Heart right ventricle (tissue), 16 donors: ENCODE measurements at regions of chr21 and their contacts with region 1.

Region 1: DNA sequence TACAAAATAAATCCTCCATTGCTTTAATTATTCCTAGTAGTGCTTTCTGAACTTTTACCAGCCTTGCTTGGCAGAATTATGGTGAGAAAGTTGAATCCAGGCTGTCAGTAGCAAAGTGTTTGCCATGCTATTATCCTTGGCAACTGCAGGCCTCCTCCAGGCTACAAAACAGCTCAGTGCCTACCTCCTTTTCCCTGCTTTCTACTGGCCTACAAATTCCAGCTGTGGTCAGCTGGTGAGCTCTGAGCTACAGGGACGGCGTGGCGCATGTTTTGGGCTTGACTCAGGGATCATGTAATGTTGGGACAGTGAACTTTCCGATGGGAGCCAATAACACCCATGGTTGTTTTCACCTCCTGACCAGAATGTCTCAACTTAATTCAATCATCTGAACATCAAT is 456.1 kb upstream of the ADAMTS5 start:
- DNase-seq: peak; percentile 51 to 59
- ATAC-seq: peak; percentile 65 to 93 (median 84)
- H3K4me3 ChIP-seq: no peak overlapping the region
- H3K27ac ChIP-seq: peak overlapping the region in 6 of 10 donors; percentile 3 to 53 (median 24)
- H3K4me1 ChIP-seq: peaks cover 0 to 53% (median 18%) of the 10 kb centered on the region in 9 donors
- H3K27me3 ChIP-seq: no peaks in the 10 kb centered on the region
- CTCF ChIP-seq: no peak

Region 2: GRCh38 chr21:26967062-26967913 is 455.8 kb before region 1 on chr21 and contains the start of gene ADAMTS5:
- intact Hi-C with region 1: loop called in 1 of 10 experiments (anchors 10 kb)
- DNase-seq: peak; percentile 35 to 55
- ATAC-seq: peak; percentile 19 to 70 (median 61)
- H3K4me3 ChIP-seq: peak within 1 kb of the TSS; percentile 53 to 76 (median 64)
- H3K27ac ChIP-seq: peak within 1 kb of the TSS; percentile 58 to 82 (median 74)
- H3K4me1 ChIP-seq: peaks cover 0 to 33% (median 15%) of the 10 kb centered on the region in 9 donors
- H3K27me3 ChIP-seq: peaks cover 0 to 62% (median 31%) of the 10 kb centered on the region in 7 donors
- CTCF ChIP-seq: no peak
- total RNA-seq, gene ADAMTS5: 1.6 to 7.1 (median 3.0) TPM

Region 3: DNA sequence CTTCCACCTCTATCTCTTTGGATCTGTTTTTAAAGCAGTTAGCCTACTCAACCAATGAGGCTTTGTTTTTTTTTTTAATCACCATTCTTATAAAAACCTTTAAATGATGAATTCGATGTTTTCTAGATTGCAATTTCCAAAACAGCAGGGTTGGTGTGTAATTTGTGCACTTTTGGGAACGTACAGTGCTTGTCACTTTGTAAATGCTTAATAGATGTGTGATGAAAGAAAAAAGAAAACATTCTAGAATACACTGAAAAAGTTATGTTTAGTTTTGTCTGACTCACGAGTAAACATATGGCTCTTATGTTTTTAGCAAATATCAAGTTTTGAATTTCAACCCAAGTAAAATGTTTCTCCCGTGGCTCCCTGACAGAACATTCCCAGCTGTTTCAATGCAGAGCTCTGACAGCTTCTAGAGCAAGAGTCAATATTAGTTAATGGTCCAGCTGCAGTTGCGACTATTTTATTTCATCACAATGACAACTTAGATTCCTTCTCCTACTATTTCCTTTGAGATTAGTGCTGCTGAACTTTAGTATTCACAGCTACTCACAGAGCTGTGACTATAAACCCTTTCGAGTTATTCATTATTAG is 93.7 kb before region 1 on chr21:
- intact Hi-C with region 1: no loop called
- DNase-seq: no peak
- ATAC-seq: peak in 4 of 8 donors; percentile 42 to 73 (median 54)
- H3K4me3 ChIP-seq: no peak overlapping the region
- H3K27ac ChIP-seq: peak overlapping the region in 3 of 10 donors; percentile 3 to 26 (median 6)
- H3K4me1 ChIP-seq: no peaks in the 10 kb centered on the region
- H3K27me3 ChIP-seq: no peaks in the 10 kb centered on the region
- CTCF ChIP-seq: no peak

Region 4: GRCh38 chr21:28207436-28208173 is 784.6 kb after region 1 on chr21:
- intact Hi-C with region 1: loop called in 1 of 10 experiments (anchors 10 kb)
- DNase-seq: no peak
- ATAC-seq: peak in 3 of 8 donors; percentile 42 to 65 (median 47)
- H3K4me3 ChIP-seq: peak overlapping the region in 1 of 10 donors; percentile 9
- H3K27ac ChIP-seq: no peak overlapping the region
- H3K4me1 ChIP-seq: peaks cover 0 to 7% (median 0%) of the 10 kb centered on the region in 9 donors
- H3K27me3 ChIP-seq: no peaks in the 10 kb centered on the region
- CTCF ChIP-seq: no peak

Region 5: GRCh38 chr21:28884976-28885852 is 1462.2 kb after region 1 on chr21:
- intact Hi-C with region 1: loop called in 1 of 10 experiments (anchors 10 kb)
- DNase-seq: peak; percentile 86 to 88
- ATAC-seq: peak; percentile 97 to 100 (median 99)
- H3K4me3 ChIP-seq: peak overlapping the region; percentile 42 to 70 (median 60)
- H3K27ac ChIP-seq: peak overlapping the region; percentile 80 to 97 (median 92)
- H3K4me1 ChIP-seq: peaks cover 0 to 19% (median 10%) of the 10 kb centered on the region in 9 donors
- H3K27me3 ChIP-seq: peaks cover 0 to 6% (median 0%) of the 10 kb centered on the region in 7 donors
- CTCF ChIP-seq: no peak